Mammary epithelial cell (primary cell): ENCODE measurements at regions of chr3 and their contacts with region 1.

Region 1: DNA sequence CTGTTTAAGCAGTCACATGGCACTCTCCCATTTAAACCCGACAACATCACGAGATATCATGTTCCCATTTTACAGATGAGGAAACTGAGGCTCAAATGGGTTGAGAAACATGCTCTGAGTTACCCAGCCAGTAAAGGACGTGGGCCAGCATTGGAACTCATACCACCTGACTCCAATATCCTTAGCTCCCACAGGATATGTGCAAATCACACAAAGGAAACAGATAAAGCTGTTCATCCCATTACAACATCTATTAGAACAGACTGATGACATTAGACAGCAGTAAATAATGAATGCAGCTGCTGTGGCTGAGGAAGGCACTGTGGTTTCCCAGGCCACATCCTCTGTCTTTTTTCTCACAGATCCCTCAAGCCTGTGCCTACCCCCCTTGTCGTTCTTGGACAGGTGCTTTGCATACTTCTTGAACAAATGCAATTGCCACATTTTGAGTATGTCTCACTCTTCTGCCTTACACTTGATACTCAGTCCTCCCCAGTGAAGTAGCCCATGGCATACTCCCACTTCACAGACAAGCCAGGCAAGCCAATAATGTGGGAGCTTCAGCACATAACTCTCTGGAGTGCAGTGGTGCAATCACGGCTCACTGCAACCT is 17.7 kb downstream of the FRMD4B start:
- DNase-seq: peak; percentile 73
- H3K4me3 ChIP-seq: no peak overlapping the region
- H3K27ac ChIP-seq: peak overlapping the region; percentile 87
- H3K4me1 ChIP-seq: peaks cover 65% of the 10 kb centered on the region
- H3K27me3 ChIP-seq: no peaks in the 10 kb centered on the region
- CTCF ChIP-seq: no peak

Region 2: DNA sequence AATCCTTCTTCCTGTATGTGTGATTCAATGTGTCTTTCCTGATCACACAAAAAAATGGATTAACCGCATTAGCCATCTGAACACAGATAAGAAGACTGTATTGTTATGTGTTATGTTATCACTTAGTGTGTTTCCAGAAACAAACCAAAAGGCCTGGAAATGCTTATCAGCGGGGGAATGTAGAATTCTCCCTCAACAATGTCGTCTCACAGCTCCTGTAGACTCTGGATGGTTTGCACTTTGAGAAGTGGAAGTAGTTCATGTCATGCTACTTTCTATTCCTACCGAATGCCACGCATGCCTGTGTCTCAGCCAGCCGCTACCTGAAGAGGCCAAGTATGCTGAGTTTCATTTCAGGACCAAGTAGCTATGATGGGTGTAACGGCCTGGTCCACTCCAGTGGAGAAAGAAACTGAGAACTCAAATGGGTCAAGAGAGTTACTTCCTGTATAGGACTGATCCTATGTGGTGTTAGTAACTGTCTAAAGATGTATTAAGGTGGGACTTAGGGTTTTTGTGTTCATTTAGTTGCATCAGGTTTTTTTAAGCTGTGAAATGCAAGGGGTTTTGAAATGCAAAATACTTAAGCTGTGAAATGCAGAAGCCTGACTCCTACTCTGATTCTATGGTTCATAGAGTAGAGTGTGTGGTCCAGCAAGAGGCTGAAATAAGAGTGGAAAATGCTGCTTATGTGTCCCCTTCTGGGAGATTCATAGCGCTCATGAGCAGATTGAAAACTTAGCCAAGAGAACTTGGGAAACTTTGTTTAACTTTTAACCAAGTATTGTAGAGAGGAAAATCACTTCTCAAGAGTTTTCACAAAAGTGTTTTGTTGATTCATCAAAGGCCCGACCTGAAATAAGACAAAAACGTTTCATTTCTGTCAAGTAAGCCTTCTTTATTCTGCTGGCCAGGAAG is 127.3 kb before region 1 on chr3:
- CTCF ChIA-PET with region 1: no interaction called
- dilution Hi-C with region 1: no loop called
- in situ Hi-C with region 1: no loop called
- intact Hi-C with region 1: no loop called
- DNase-seq: no peak
- H3K4me3 ChIP-seq: no peak overlapping the region
- H3K27ac ChIP-seq: no peak overlapping the region
- H3K4me1 ChIP-seq: no peaks in the 10 kb centered on the region
- H3K27me3 ChIP-seq: no peaks in the 10 kb centered on the region
- CTCF ChIP-seq: no peak

Region 3: DNA sequence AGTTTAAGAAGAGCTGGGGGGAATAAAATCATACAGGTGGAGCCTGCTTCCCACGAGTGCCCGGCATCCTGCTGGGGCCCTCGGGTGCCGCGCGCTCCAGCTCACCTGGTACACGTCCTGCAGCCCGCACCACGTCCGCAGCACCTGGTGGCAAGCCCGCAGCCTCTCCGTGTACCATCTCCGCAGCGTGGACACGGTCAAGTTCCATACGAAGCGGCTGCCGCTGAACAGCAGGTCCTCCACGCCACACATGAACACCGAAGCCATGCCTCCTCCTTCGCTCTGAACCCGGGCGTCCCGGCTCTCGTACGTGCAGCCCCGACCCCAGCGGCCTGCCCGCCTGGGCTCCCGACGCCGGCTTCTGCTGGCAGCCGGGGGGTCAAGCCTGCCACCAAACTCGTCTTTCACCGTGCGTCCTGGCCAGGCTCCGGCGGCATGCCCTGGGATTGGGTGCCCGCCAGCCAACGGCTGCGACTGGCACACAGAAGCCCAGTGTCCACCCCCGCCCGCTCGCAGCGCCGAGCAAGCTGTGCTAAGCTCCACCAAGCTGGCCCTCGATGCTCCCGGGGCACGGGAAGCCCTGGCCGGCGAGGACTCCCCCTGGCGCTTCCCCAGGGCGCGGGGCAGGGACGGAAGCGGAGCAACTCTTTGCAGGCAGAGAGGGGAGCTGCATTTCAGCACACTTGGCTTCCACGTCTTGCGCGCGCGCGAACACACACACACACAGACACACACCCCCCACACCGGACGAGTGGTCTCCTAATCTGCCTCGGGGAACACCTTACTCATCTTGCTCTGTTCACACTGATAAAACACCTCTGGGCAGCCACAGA is 17.7 kb after region 1 on chr3 and contains the start of gene FRMD4B:
- CTCF ChIA-PET with region 1: interaction called, 5 read pairs
- dilution Hi-C with region 1: no loop called
- in situ Hi-C with region 1: no loop called
- intact Hi-C with region 1: loop called (anchors 1 kb)
- DNase-seq: peak; percentile 65
- H3K4me3 ChIP-seq: peak within 1 kb of the TSS; percentile 32 to 68 (median 59)
- H3K27ac ChIP-seq: peak within 1 kb of the TSS; percentile 76
- H3K4me1 ChIP-seq: peaks cover 41% of the 10 kb centered on the region
- H3K27me3 ChIP-seq: no peaks in the 10 kb centered on the region
- CTCF ChIP-seq: peak; percentile 16 to 43
- total RNA-seq, gene FRMD4B: 42.0 to 64.1 TPM

Region 4: DNA sequence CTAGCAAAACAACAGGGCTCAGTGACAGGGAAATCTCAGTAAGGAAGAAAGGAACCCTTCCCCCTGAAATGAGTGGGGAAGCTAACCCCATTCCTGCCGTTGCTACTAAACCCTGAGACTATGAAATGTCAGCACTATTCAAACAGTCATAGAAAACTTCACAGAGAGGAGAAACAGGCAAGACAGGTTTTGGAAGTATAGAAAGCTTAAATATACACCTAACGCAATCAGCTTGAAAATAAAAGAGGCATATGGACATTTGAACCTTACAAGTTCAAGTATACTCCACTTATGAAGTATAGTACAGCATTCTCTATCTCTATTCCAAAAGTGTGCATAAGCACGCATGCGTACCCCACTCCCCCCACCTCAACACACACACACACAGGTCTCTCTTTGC is 35.2 kb after region 1 on chr3:
- CTCF ChIA-PET with region 1: no interaction called
- dilution Hi-C with region 1: no loop called
- in situ Hi-C with region 1: no loop called
- intact Hi-C with region 1: no loop called
- DNase-seq: no peak
- H3K4me3 ChIP-seq: no peak overlapping the region
- H3K27ac ChIP-seq: no peak overlapping the region
- H3K4me1 ChIP-seq: no peaks in the 10 kb centered on the region
- H3K27me3 ChIP-seq: no peaks in the 10 kb centered on the region
- CTCF ChIP-seq: no peak